ENCODE measurements at regions of chr10 and their contacts with region 1.

Region 1: GRCh38 chr10:119080521-119081260 is at the start of gene EIF3A:
- DNase-seq: peak; percentile 85 to 95 (median 91)
- ATAC-seq: peak; percentile 72
- H3K4me3 ChIP-seq: peak within 1 kb of the TSS; percentile 64 to 99
- H3K4me3 Mint-ChIP-seq: peak within 1 kb of the TSS; percentile 94
- H3K27ac ChIP-seq: peak within 1 kb of the TSS; percentile 82 to 96
- H3K27ac Mint-ChIP-seq: peak within 1 kb of the TSS; percentile 97
- H3K4me1 ChIP-seq: peaks cover 24% of the 10 kb centered on the region
- H3K4me1 Mint-ChIP-seq: peaks cover 45% of the 10 kb centered on the region
- H3K27me3 ChIP-seq: no peaks in the 10 kb centered on the region
- H3K27me3 Mint-ChIP-seq: no peaks in the 10 kb centered on the region
- CTCF ChIP-seq: no peak
- total RNA-seq, gene EIF3A: 121 to 128 TPM

Region 2: GRCh38 chr10:119028900-119029612 is 51.6 kb before region 1 on chr10:
- CTCF ChIA-PET with region 1: no interaction called
- POLR2A ChIA-PET with region 1: interaction called, 3 read pairs
- intact Hi-C with region 1: loop called (anchors 2 to 5 kb)
- DNase-seq: peak; percentile 59 to 90 (median 79)
- ATAC-seq: peak; percentile 84
- H3K4me3 ChIP-seq: peak overlapping the region; percentile 37 to 53
- H3K4me3 Mint-ChIP-seq: peak overlapping the region; percentile 77
- H3K27ac ChIP-seq: no peak overlapping the region
- H3K27ac Mint-ChIP-seq: no peak overlapping the region
- H3K4me1 ChIP-seq: peaks cover 10% of the 10 kb centered on the region
- H3K4me1 Mint-ChIP-seq: peaks cover 11% of the 10 kb centered on the region
- H3K27me3 ChIP-seq: no peaks in the 10 kb centered on the region
- H3K27me3 Mint-ChIP-seq: no peaks in the 10 kb centered on the region
- CTCF ChIP-seq: no peak

Region 3: GRCh38 chr10:119103903-119104652 is 23.4 kb after region 1 on chr10 and contains the start of gene DENND10:
- CTCF ChIA-PET with region 1: no interaction called
- POLR2A ChIA-PET with region 1: interaction called, 12 read pairs
- intact Hi-C with region 1: loop called (anchors 1 kb)
- DNase-seq: peak; percentile 55 to 88 (median 78)
- ATAC-seq: peak; percentile 85
- H3K4me3 ChIP-seq: peak within 1 kb of the TSS; percentile 46 to 49
- H3K4me3 Mint-ChIP-seq: peak within 1 kb of the TSS; percentile 90
- H3K27ac ChIP-seq: peak within 1 kb of the TSS; percentile 37 to 59
- H3K27ac Mint-ChIP-seq: peak within 1 kb of the TSS; percentile 93
- H3K4me1 ChIP-seq: peaks cover 4% of the 10 kb centered on the region
- H3K4me1 Mint-ChIP-seq: peaks cover 20% of the 10 kb centered on the region
- H3K27me3 ChIP-seq: no peaks in the 10 kb centered on the region
- H3K27me3 Mint-ChIP-seq: no peaks in the 10 kb centered on the region
- CTCF ChIP-seq: no peak
- total RNA-seq, gene DENND10: 28.8 to 30.5 TPM

Region 4: GRCh38 chr10:119305860-119306513 is 225.3 kb after region 1 on chr10:
- CTCF ChIA-PET with region 1: no interaction called
- POLR2A ChIA-PET with region 1: no interaction called
- intact Hi-C with region 1: loop called in 1 of 2 experiments (anchors 10 kb)
- DNase-seq: peak; percentile 49 to 94 (median 86)
- ATAC-seq: peak; percentile 79
- H3K4me3 ChIP-seq: peak overlapping the region; percentile 50 to 57
- H3K4me3 Mint-ChIP-seq: peak overlapping the region; percentile 89
- H3K27ac ChIP-seq: peak overlapping the region; percentile 63 to 90
- H3K27ac Mint-ChIP-seq: peak overlapping the region; percentile 97
- H3K4me1 ChIP-seq: peaks cover 57% of the 10 kb centered on the region
- H3K4me1 Mint-ChIP-seq: peaks cover 67% of the 10 kb centered on the region
- H3K27me3 ChIP-seq: peaks cover 0 to 3% of the 10 kb centered on the region in 2 experiments
- H3K27me3 Mint-ChIP-seq: no peaks in the 10 kb centered on the region
- CTCF ChIP-seq: no peak

Region 5: DNA sequence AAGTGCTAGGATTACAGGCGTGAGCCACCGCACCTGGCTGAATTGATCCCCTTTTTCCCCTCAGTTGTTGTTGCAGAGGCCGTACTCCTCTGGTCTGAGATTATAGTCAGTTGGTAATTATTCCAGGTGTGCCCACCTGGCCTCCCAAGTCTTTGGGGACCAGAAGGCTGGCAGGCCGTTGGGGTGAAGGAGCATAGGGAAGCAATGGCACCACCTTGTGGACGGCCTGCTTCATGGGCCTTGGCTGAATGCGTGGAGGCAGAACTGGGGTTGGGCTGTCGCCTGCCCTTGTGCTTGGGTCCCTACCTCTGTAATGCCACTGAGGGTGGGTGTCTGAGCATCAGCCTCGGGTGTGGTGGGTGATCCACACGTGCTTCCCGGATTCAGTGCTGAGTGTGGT is 336.2 kb after region 1 on chr10:
- CTCF ChIA-PET with region 1: no interaction called
- POLR2A ChIA-PET with region 1: no interaction called
- intact Hi-C with region 1: no loop called
- DNase-seq: peak; percentile 45 to 83 (median 73)
- ATAC-seq: peak; percentile 86
- H3K4me3 ChIP-seq: no peak overlapping the region
- H3K4me3 Mint-ChIP-seq: no peak overlapping the region
- H3K27ac ChIP-seq: no peak overlapping the region
- H3K27ac Mint-ChIP-seq: no peak overlapping the region
- H3K4me1 ChIP-seq: no peaks in the 10 kb centered on the region
- H3K4me1 Mint-ChIP-seq: peaks cover 2% of the 10 kb centered on the region
- H3K27me3 ChIP-seq: no peaks in the 10 kb centered on the region
- H3K27me3 Mint-ChIP-seq: no peaks in the 10 kb centered on the region
- CTCF ChIP-seq: peak; percentile 60

Region 6: DNA sequence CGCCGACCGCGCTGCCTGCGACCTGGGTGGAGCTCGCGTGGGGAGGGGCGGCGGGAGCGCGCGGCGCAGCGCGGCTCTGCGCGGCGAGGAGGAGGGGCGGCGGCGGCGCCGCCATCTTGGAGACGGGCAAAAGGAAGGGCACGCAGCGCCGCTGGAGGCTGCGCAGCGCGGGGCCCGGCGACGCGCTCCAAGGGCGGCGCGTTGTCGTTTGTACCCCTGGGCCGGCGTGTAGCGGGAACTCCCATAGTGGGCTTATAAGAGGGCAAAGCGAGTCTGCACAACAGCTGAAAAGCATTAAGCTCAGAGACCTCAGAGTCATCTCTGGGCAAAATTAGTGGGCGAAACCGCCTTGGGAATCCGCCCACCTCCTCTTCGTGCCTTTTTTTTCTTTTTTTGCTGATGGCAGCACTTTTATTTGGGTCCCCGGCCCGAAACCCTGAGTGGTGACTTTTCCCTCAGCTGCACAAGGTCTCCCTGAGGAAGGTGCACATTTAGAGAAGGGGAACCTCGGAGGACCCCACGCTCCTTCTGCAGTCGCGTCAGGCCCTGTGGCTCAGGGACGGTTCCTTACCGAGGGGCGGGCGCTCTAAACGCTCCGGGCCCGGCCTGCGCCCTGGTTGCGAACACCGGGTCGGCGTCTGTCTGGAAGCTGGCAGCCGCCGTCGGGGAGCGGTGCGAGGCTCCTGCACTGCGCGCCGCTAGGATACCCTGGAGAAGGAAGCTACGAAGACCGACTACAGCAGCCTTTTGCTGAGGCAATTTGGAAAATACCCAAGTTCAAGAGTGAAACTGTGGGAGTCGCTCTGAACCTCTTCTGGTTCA is 792.4 kb after region 1 on chr10:
- CTCF ChIA-PET with region 1: no interaction called
- POLR2A ChIA-PET with region 1: interaction called, 3 read pairs
- intact Hi-C with region 1: loop called (anchors 5 kb)
- DNase-seq: peak; percentile 79 to 95 (median 87)
- ATAC-seq: peak; percentile 90
- H3K4me3 ChIP-seq: peak overlapping the region; percentile 68 to 96
- H3K4me3 Mint-ChIP-seq: peak overlapping the region; percentile 88
- H3K27ac ChIP-seq: peak overlapping the region; percentile 81 to 86
- H3K27ac Mint-ChIP-seq: peak overlapping the region; percentile 87
- H3K4me1 ChIP-seq: peaks cover 22% of the 10 kb centered on the region
- H3K4me1 Mint-ChIP-seq: peaks cover 39% of the 10 kb centered on the region
- H3K27me3 ChIP-seq: no peaks in the 10 kb centered on the region
- H3K27me3 Mint-ChIP-seq: no peaks in the 10 kb centered on the region
- CTCF ChIP-seq: no peak